ENCODE measurements at regions of chr3 and their contacts with region 1.

Region 1: DNA sequence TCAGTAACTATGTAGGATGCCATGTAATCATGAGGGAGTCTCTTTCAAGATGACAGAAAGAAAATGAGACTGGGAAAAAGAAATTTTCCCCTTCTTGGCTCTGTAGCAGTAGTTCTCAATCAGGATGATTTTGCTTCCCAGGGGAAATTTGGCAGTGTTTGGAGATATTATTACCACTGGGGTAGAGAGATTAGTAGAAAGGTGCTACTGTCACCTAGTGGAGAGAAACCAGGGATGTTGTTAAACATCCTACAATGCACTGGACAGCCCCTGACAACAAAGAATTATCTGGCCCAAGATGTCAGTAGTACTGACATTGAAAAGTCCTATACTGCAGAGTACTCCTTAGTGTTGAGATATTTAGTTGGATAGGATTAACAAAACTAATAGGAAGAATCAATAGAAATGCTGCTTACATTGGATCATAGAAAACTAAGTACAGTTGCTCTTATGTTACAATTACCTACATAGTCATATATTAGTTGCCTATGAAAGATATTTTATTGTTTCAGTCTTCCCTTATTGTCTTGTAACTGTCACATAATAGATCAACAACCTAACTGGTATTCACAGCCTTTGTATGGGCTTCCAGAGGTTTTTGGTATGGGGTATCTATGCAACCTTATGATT is 433.3 kb downstream of the RAP2B start:
- DNase-seq: peak; percentile 54

Region 2: GRCh38 chr3:153001210-153002078 is 593.9 kb before region 1 on chr3:
- in situ Hi-C with region 1: loop called (anchors 25 kb)
- DNase-seq: no peak

Region 3: GRCh38 chr3:154252759-154253638 is 657.7 kb after region 1 on chr3:
- in situ Hi-C with region 1: no loop called
- DNase-seq: peak; percentile 85

Measured in KBM-7 (cell line).